ENCODE measurements at regions of chr2 and their contacts with region 1.

Region 1: GRCh38 chr2:234500394-234501006 is 3.6 kb upstream of the ARL4C start:
- DNase-seq: peak; percentile 43 to 67 (median 67)
- H3K4me3 ChIP-seq: no peak overlapping the region
- H3K4me3 Mint-ChIP-seq: peak overlapping the region in 1 of 2 donors; percentile 24
- H3K27ac ChIP-seq: no peak overlapping the region
- H3K27ac Mint-ChIP-seq: peak overlapping the region in 1 of 7 donors; percentile 83
- H3K4me1 ChIP-seq: peaks cover 9% of the 10 kb centered on the region in 2 donors
- H3K4me1 Mint-ChIP-seq: peaks cover 8% of the 10 kb centered on the region
- H3K27me3 ChIP-seq: peaks cover 8 to 11% of the 10 kb centered on the region in 2 donors
- H3K27me3 Mint-ChIP-seq: peaks cover 21 to 36% (median 33%) of the 10 kb centered on the region in 3 donors
- CTCF ChIP-seq: peak; percentile 57

Region 2: GRCh38 chr2:233832869-233833311 is 667.6 kb before region 1 on chr2:
- intact Hi-C with region 1: no loop called
- DNase-seq: no peak
- H3K4me3 ChIP-seq: no peak overlapping the region
- H3K4me3 Mint-ChIP-seq: no peak overlapping the region
- H3K27ac ChIP-seq: no peak overlapping the region
- H3K27ac Mint-ChIP-seq: peak overlapping the region in 2 of 7 donors; percentile 20 to 25
- H3K4me1 ChIP-seq: no peaks in the 10 kb centered on the region
- H3K4me1 Mint-ChIP-seq: peaks cover 2% of the 10 kb centered on the region
- H3K27me3 ChIP-seq: no peaks in the 10 kb centered on the region
- H3K27me3 Mint-ChIP-seq: peaks cover 0 to 3% (median 0%) of the 10 kb centered on the region in 3 donors
- CTCF ChIP-seq: no peak

Region 3: DNA sequence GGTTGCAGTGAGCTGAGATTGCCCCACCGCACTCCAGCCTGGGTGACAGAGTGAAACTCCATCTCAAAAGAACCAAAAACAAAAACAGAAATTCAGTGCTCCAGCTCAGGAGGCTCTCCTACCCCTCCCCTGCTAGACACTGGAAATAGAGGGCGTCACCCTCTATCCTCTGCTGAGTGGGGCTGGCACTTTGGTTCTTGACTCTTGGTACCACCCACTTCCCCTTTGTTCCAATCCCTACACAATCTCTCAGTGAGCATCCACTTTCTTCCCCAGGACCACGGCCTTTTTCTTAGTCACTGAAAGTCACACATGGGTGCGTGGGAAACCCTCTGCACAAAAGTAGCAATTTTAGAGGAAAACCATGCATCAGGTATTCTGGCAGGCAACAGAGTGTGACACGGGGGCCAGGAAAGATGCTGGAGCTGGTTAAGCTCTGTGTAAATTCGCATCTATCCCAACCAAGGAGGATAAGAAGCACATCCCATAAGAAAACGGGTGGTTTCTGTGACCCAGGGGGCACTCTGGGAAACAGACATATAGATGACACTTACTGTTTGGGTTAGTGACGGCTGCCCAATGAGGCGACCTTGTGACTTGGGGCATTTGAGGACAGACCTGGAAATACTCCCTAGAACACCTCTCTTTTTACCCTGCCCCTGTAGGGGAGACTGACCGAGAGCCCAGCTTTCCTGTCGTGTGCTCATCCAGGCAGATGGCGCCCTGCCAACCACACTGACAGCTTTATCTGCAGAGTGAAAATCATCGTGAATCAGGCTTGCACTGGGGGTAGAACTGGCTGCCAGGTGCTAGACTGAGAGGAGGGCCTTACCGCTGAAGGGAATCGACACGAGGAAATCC is 653.9 kb before region 1 on chr2:
- intact Hi-C with region 1: loop called (anchors 10 kb)
- DNase-seq: no peak
- H3K4me3 ChIP-seq: no peak overlapping the region
- H3K4me3 Mint-ChIP-seq: no peak overlapping the region
- H3K27ac ChIP-seq: peak overlapping the region in 1 of 2 donors; percentile 58
- H3K27ac Mint-ChIP-seq: peak overlapping the region in 5 of 7 donors; percentile 32 to 57 (median 53)
- H3K4me1 ChIP-seq: no peaks in the 10 kb centered on the region
- H3K4me1 Mint-ChIP-seq: peaks cover 7% of the 10 kb centered on the region
- H3K27me3 ChIP-seq: no peaks in the 10 kb centered on the region
- H3K27me3 Mint-ChIP-seq: peaks cover 0 to 1% (median 0%) of the 10 kb centered on the region in 3 donors
- CTCF ChIP-seq: no peak

Region 4: GRCh38 chr2:234135720-234136221 is 364.7 kb before region 1 on chr2:
- intact Hi-C with region 1: loop called (anchors 5 to 10 kb)
- DNase-seq: peak; percentile 9 to 41 (median 24)
- H3K4me3 ChIP-seq: no peak overlapping the region
- H3K4me3 Mint-ChIP-seq: no peak overlapping the region
- H3K27ac ChIP-seq: no peak overlapping the region
- H3K27ac Mint-ChIP-seq: no peak overlapping the region
- H3K4me1 ChIP-seq: no peaks in the 10 kb centered on the region
- H3K4me1 Mint-ChIP-seq: no peaks in the 10 kb centered on the region
- H3K27me3 ChIP-seq: no peaks in the 10 kb centered on the region
- H3K27me3 Mint-ChIP-seq: peaks cover 0 to 9% (median 7%) of the 10 kb centered on the region in 3 donors
- CTCF ChIP-seq: peak; percentile 60

Region 5: DNA sequence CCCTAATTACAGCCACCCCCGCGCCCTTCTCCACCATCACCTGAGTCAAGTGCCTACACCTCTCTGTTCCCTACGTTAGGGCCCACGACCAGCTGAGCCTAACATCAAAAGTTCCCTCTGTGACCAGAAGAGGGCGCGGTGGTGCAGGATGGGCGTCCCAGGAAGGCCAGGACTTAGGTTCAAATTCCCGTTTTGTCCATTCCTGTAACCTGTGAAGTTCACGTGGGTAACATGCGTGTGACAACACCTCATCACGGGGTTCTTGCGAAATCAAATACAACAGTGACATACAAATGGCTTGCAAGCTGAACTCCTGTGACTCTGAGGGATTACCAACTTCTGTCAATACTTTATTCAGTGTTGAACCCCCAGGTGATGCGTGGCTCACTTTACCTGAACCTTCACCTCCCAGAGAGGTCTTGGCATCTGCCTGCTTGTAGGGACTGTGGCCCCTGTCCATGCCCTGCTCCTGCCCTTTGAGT is 211.5 kb before region 1 on chr2:
- intact Hi-C with region 1: loop called (anchors 1 to 5 kb)
- DNase-seq: peak; percentile 86 to 92 (median 87)
- H3K4me3 ChIP-seq: no peak overlapping the region
- H3K4me3 Mint-ChIP-seq: peak overlapping the region in 1 of 2 donors; percentile 51
- H3K27ac ChIP-seq: peak overlapping the region in 1 of 2 donors; percentile 93
- H3K27ac Mint-ChIP-seq: peak overlapping the region in 6 of 7 donors; percentile 80 to 98 (median 95)
- H3K4me1 ChIP-seq: peaks cover 40 to 45% of the 10 kb centered on the region in 2 donors
- H3K4me1 Mint-ChIP-seq: peaks cover 49% of the 10 kb centered on the region
- H3K27me3 ChIP-seq: no peaks in the 10 kb centered on the region
- H3K27me3 Mint-ChIP-seq: peaks cover 3 to 11% (median 5%) of the 10 kb centered on the region in 3 donors
- CTCF ChIP-seq: peak; percentile 91

Region 6: DNA sequence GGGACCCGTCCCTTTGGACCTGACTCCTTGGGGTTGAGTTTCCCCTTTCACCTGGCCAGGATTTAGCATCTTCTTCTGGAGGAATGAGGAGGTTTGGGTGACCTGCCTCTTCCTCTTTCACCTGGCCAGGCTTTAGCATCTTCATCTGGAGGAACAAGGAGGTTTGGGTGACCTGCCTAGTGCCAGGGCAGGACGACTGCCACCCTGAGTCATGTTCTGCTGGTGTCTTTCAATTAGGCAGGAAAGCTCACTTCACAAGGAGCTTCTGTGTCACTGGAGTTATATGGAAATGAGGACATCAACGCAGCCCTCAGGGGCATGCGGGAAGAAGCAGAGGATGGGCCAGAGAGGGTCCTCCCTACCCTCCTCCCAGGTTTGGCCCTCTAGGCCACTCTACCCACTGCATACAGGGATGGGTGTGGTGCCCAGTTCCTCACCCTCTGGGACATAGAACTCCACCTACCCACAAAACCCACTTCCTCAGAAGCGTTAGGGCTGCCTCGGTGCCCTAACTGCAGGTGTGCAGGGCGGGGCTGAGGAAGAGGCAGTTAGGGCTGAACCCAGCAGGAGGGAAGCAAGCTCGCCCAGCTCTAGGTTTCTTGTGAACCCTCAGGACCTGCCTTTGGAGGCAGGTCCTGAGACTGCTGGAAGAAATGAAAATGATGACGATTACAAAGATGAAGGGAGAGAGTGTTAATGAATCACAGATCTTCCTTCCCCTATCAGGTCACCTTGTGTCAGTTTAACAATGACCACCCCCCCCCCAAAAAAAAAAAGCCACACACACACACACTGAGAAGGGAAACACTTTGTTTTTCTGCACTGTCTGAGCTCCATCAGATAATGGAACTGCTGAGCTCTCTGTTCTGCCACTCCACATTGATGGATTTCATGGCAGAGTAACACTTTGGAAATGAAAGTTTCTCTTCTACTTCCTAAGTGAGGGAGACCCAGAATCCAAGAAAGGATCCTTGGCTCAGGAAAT is 74.6 kb before region 1 on chr2:
- intact Hi-C with region 1: loop called in 1 of 2 experiments (anchors 10 kb)
- DNase-seq: peak; percentile 61 to 73 (median 72)
- H3K4me3 ChIP-seq: peak overlapping the region in 1 of 3 experiments; percentile 25
- H3K4me3 Mint-ChIP-seq: peak overlapping the region; percentile 12 to 59
- H3K27ac ChIP-seq: peak overlapping the region; percentile 91 to 92
- H3K27ac Mint-ChIP-seq: peak overlapping the region; percentile 92 to 98 (median 95)
- H3K4me1 ChIP-seq: peaks cover 62 to 72% of the 10 kb centered on the region in 2 donors
- H3K4me1 Mint-ChIP-seq: peaks cover 64% of the 10 kb centered on the region
- H3K27me3 ChIP-seq: no peaks in the 10 kb centered on the region
- H3K27me3 Mint-ChIP-seq: peaks cover 0 to 5% (median 1%) of the 10 kb centered on the region in 3 donors
- CTCF ChIP-seq: no peak

Region 7: GRCh38 chr2:234437642-234438304 is 62.7 kb before region 1 on chr2:
- intact Hi-C with region 1: no loop called
- DNase-seq: no peak
- H3K4me3 ChIP-seq: no peak overlapping the region
- H3K4me3 Mint-ChIP-seq: no peak overlapping the region
- H3K27ac ChIP-seq: no peak overlapping the region
- H3K27ac Mint-ChIP-seq: no peak overlapping the region
- H3K4me1 ChIP-seq: peaks cover 8 to 16% of the 10 kb centered on the region in 2 donors
- H3K4me1 Mint-ChIP-seq: peaks cover 15% of the 10 kb centered on the region
- H3K27me3 ChIP-seq: no peaks in the 10 kb centered on the region
- H3K27me3 Mint-ChIP-seq: peaks cover 1 to 8% (median 5%) of the 10 kb centered on the region in 3 donors
- CTCF ChIP-seq: no peak

Region 8: DNA sequence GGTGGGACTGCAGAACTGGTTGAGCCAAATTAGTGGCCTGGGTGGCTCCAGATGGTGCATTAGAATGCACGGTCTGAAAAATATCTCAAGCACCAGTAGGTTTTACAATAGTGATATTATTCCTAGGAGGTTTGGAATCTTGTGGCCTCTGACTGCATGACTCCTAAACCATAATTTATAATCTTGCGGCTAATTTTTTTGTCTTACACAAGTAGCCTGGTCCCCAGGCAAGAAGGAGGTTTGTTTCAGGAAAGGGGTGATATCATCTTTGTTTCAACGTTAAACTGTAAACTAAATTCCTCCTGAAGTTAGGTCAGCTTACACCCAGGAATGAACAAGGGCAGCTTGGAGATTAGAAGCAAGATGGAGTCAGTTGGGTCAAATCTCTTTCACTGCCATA is 95.3 kb after region 1 on chr2:
- intact Hi-C with region 1: no loop called
- DNase-seq: no peak
- H3K4me3 ChIP-seq: no peak overlapping the region
- H3K4me3 Mint-ChIP-seq: no peak overlapping the region
- H3K27ac ChIP-seq: no peak overlapping the region
- H3K27ac Mint-ChIP-seq: no peak overlapping the region
- H3K4me1 ChIP-seq: no peaks in the 10 kb centered on the region
- H3K4me1 Mint-ChIP-seq: no peaks in the 10 kb centered on the region
- H3K27me3 ChIP-seq: no peaks in the 10 kb centered on the region
- H3K27me3 Mint-ChIP-seq: peaks cover 0 to 5% (median 2%) of the 10 kb centered on the region in 3 donors
- CTCF ChIP-seq: no peak

Measured in CD14-positive monocyte (primary cell).